ENCODE measurements at regions of chr4 and their contacts with region 1.

Region 1: GRCh38 chr4:158193171-158193749 is 17.0 kb upstream of the TMEM144 start:
- DNase-seq: peak in 1 of 2 donors; percentile 57
- H3K4me3 ChIP-seq: no peak overlapping the region
- H3K27ac ChIP-seq: no peak overlapping the region
- H3K4me1 ChIP-seq: peaks cover 0 to 3% (median 0%) of the 10 kb centered on the region in 4 donors
- H3K27me3 ChIP-seq: no peaks in the 10 kb centered on the region
- CTCF ChIP-seq: peak in 5 of 7 experiments; percentile 36 to 64 (median 38)
- EP300 ChIP-seq: no peak
- POLR2A ChIP-seq: no peak

Region 2: DNA sequence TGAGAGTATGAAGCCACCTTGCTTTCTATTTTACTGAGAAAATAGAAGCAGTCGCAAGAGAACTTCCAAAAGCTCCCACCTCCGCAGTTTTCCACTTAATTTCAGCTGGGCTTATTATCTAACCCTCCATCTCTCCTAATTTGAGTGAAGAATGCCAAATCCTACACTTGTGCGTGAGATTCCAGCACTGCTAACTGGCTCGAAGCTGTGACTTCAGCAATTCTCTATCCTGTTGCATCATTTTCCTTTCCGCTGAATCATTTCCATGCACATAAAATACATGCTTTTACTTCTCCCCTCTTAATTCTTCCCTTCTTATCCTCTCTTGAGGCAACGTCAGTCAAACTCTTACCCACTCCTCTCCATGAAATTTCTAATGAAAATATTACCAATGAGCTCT is 210.0 kb before region 1 on chr4:
- intact Hi-C with region 1: loop called (anchors 10 kb)
- DNase-seq: no peak
- H3K4me3 ChIP-seq: no peak overlapping the region
- H3K27ac ChIP-seq: no peak overlapping the region
- H3K4me1 ChIP-seq: peaks cover 0 to 7% (median 3%) of the 10 kb centered on the region in 4 donors
- H3K27me3 ChIP-seq: no peaks in the 10 kb centered on the region
- CTCF ChIP-seq: no peak
- EP300 ChIP-seq: no peak
- POLR2A ChIP-seq: no peak

Region 3: GRCh38 chr4:158253350-158253980 is 60.2 kb after region 1 on chr4:
- intact Hi-C with region 1: loop called (anchors 10 kb)
- DNase-seq: peak; percentile 35 to 86
- H3K4me3 ChIP-seq: no peak overlapping the region
- H3K27ac ChIP-seq: no peak overlapping the region
- H3K4me1 ChIP-seq: peaks cover 0 to 15% (median 2%) of the 10 kb centered on the region in 4 donors
- H3K27me3 ChIP-seq: no peaks in the 10 kb centered on the region
- CTCF ChIP-seq: peak in 3 of 7 experiments; percentile 44 to 56 (median 53)
- EP300 ChIP-seq: no peak
- POLR2A ChIP-seq: no peak